Natural killer cell (primary cell): ENCODE measurements at regions of chr11 and their contacts with region 1.

Region 1: GRCh38 chr11:124793466-124794278 is 6.5 kb downstream of the MSANTD2 start:
- DNase-seq: peak in 1 of 2 donors; percentile 70
- ATAC-seq: peak in 2 of 3 donors; percentile 71 to 77
- H3K4me3 ChIP-seq: no peak overlapping the region
- H3K4me3 Mint-ChIP-seq: no peak overlapping the region
- H3K27ac ChIP-seq: no peak overlapping the region
- H3K27ac Mint-ChIP-seq: no peak overlapping the region
- H3K4me1 ChIP-seq: no peaks in the 10 kb centered on the region
- H3K4me1 Mint-ChIP-seq: peaks cover 33 to 42% of the 10 kb centered on the region in 2 donors
- H3K27me3 ChIP-seq: no peaks in the 10 kb centered on the region
- H3K27me3 Mint-ChIP-seq: no peaks in the 10 kb centered on the region
- CTCF ChIP-seq: peak; percentile 79

Region 2: DNA sequence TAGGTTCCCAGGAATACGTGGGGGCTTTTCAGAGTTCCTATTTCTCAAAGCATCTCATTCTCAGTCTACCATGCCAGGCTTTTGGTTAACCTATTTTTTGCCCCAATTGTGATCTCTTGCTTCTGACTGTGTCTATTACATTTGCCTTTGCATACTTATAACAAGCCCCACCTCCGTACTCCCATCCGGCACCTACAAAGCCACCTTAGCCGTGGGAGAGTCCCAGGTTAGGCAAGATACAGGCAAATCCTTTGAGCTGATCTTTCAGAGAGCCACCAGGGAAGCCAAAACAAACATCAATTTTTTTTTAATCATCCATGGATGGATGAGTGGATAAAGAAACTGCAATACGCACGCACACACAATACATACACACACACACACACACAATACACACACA is 201.0 kb before region 1 on chr11:
- intact Hi-C with region 1: no loop called
- DNase-seq: no peak
- ATAC-seq: no peak
- H3K4me3 ChIP-seq: no peak overlapping the region
- H3K4me3 Mint-ChIP-seq: no peak overlapping the region
- H3K27ac ChIP-seq: no peak overlapping the region
- H3K27ac Mint-ChIP-seq: no peak overlapping the region
- H3K4me1 ChIP-seq: no peaks in the 10 kb centered on the region
- H3K4me1 Mint-ChIP-seq: no peaks in the 10 kb centered on the region
- H3K27me3 ChIP-seq: no peaks in the 10 kb centered on the region
- H3K27me3 Mint-ChIP-seq: peaks cover 17 to 26% of the 10 kb centered on the region in 2 donors
- CTCF ChIP-seq: no peak

Region 3: DNA sequence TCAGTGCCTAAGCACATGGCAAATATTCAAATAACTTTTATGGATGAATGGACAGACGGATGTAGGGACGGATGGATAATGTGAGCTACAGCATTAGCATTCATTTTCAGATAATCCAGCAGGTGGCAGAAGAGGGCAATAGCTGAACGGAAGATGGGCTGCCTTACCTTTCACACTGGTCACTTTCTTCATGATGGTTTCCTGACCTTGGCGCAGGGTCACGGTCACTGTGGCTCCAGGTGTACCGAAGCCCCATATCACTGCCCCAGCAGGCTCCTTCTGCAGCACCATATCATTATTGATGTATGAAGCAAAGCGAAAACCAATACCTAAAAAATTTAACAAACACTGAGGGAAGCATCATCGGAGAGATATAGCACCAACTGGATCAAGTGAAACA is 124.5 kb before region 1 on chr11:
- intact Hi-C with region 1: loop called (anchors 1 kb)
- DNase-seq: peak in 1 of 2 donors; percentile 81
- ATAC-seq: peak in 2 of 3 donors; percentile 29 to 33
- H3K4me3 ChIP-seq: no peak overlapping the region
- H3K4me3 Mint-ChIP-seq: no peak overlapping the region
- H3K27ac ChIP-seq: no peak overlapping the region
- H3K27ac Mint-ChIP-seq: no peak overlapping the region
- H3K4me1 ChIP-seq: peaks cover 18% of the 10 kb centered on the region
- H3K4me1 Mint-ChIP-seq: peaks cover 12 to 15% of the 10 kb centered on the region in 2 donors
- H3K27me3 ChIP-seq: no peaks in the 10 kb centered on the region
- H3K27me3 Mint-ChIP-seq: no peaks in the 10 kb centered on the region
- CTCF ChIP-seq: peak; percentile 93

Region 4: DNA sequence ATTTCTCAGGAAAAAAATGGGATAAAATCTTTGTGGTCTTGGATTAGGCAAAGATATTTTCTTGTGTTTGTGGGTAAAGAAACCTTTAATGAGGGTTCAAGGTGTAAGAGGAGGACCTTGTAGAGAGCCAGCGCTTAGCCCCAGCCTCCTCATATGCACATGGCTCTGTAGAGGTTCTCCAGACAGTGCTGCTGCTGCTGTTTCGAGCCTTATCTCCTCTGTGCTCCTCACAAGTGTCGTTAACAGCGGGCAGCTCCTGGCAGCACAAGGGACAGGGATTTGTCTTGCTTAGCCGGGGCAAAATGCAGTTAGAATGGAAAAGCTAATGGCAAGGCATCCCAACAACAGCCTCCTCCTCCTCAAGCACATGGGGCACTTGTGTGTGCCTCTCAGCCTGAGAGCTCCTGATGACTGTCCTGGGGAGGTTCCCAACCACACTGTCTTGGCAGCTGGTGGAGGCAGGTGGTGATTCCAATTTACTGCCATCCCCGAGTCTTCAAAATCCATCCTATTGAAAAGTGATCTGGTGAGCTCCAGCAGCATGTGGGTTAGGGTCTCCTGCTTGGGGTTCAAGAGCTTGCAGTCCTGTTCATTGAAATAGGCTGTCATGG is 14.1 kb after region 1 on chr11:
- intact Hi-C with region 1: no loop called
- DNase-seq: no peak
- ATAC-seq: no peak
- H3K4me3 ChIP-seq: no peak overlapping the region
- H3K4me3 Mint-ChIP-seq: no peak overlapping the region
- H3K27ac ChIP-seq: no peak overlapping the region
- H3K27ac Mint-ChIP-seq: no peak overlapping the region
- H3K4me1 ChIP-seq: no peaks in the 10 kb centered on the region
- H3K4me1 Mint-ChIP-seq: no peaks in the 10 kb centered on the region
- H3K27me3 ChIP-seq: peaks cover 7% of the 10 kb centered on the region
- H3K27me3 Mint-ChIP-seq: peaks cover 7 to 21% of the 10 kb centered on the region in 2 donors
- CTCF ChIP-seq: no peak